ENCODE measurements at regions of chr19 and their contacts with region 1.

Region 1: DNA sequence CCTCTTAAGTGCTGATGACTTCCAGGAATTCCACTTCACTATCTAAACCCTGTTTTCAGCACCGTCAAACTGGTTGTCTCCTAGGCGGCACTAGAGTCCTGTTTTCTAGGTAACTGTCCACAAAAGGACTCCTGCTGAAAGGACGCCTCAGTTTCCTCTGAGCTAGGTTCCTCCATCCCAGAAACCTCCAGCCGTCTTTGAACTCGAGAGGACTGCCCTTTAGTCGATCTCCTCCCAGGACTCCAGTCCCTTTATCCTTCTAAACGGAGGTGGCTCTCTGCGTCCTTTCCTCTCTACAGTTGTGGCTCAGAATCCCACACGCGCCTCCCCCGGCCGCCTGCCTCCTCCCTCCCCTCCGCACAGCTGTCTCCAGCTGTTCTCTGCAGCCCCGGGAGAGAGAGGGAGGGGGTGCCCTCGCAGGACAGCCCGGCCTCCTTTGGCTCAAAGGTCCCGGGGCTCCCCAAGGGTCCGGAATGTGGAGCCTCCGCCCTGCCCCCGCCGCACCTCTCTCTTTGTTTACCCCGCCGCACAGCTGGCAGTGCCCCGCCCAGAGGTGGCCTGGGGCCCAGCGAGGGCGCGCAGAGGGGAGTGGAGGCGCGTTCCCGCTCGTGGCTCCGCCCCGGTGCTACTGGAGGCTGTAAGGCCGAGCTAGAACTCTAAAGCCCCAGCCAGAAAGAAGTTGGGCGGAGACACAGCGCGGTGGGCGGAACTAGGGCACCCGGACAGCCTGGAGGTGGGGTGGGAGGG is 2.4 kb downstream of the LTBP4 start:
- DNase-seq: peak; percentile 97
- H3K4me3 Mint-ChIP-seq: peak overlapping the region; percentile 86
- H3K27ac Mint-ChIP-seq: peak overlapping the region; percentile 87
- H3K4me1 Mint-ChIP-seq: peaks cover 58% of the 10 kb centered on the region
- H3K27me3 Mint-ChIP-seq: peaks cover 26% of the 10 kb centered on the region

Region 2: DNA sequence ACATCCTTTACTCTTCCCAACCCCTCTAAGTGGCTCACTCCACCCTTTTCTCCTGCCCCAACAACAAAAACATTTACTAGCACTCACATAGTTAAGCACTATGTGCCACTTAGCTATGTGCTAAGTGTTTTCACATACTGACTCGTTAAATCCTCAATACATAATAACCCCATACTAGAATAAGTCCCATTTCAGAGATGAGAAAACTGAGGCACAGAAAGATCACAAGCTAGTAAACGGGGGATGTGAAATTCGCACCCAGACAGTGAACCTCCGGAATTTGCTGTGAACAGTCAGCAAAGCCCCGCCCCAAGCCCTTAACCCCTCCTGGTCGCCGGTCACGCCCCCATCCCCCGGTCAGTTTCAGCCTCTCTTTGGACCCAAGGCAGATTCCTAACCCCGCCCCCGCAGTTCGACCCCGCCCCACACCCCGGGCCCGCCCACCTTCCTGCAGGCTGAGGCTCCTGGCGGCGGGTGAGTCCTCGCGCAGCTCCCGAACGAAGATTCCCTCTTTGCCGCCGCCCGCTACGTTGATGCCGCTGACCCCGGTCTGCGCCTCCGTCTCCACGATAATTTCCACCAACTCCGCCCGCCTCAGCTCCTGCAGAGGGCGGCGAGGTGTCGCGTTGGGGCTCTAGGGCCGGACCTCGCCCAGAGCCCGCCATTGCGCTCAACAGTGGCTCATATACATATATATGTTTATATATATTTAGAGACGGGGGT is 200.1 kb before region 1 on chr19:
- intact Hi-C with region 1: loop called (anchors 2 kb)
- DNase-seq: peak; percentile 80
- H3K4me3 Mint-ChIP-seq: peak overlapping the region; percentile 83
- H3K27ac Mint-ChIP-seq: peak overlapping the region; percentile 72
- H3K4me1 Mint-ChIP-seq: peaks cover 21% of the 10 kb centered on the region
- H3K27me3 Mint-ChIP-seq: peaks cover 7% of the 10 kb centered on the region

Region 3: GRCh38 chr19:40444192-40445028 is 159.2 kb before region 1 on chr19 and contains the start of gene SERTAD3:
- intact Hi-C with region 1: loop called (anchors 1 kb)
- DNase-seq: peak; percentile 97
- H3K4me3 Mint-ChIP-seq: peak within 1 kb of the TSS; percentile 97
- H3K27ac Mint-ChIP-seq: peak within 1 kb of the TSS; percentile 97
- H3K4me1 Mint-ChIP-seq: peaks cover 26% of the 10 kb centered on the region
- H3K27me3 Mint-ChIP-seq: no peaks in the 10 kb centered on the region
- total RNA-seq, gene SERTAD3: 6.4 and 10.0 TPM in 2 replicates

Region 4: GRCh38 chr19:40529093-40529954 is 74.2 kb before region 1 on chr19:
- intact Hi-C with region 1: loop called (anchors 1 kb)
- DNase-seq: peak; percentile 89
- H3K4me3 Mint-ChIP-seq: peak overlapping the region; percentile 74
- H3K27ac Mint-ChIP-seq: peak overlapping the region; percentile 79
- H3K4me1 Mint-ChIP-seq: peaks cover 13% of the 10 kb centered on the region
- H3K27me3 Mint-ChIP-seq: peaks cover 35% of the 10 kb centered on the region

Region 5: DNA sequence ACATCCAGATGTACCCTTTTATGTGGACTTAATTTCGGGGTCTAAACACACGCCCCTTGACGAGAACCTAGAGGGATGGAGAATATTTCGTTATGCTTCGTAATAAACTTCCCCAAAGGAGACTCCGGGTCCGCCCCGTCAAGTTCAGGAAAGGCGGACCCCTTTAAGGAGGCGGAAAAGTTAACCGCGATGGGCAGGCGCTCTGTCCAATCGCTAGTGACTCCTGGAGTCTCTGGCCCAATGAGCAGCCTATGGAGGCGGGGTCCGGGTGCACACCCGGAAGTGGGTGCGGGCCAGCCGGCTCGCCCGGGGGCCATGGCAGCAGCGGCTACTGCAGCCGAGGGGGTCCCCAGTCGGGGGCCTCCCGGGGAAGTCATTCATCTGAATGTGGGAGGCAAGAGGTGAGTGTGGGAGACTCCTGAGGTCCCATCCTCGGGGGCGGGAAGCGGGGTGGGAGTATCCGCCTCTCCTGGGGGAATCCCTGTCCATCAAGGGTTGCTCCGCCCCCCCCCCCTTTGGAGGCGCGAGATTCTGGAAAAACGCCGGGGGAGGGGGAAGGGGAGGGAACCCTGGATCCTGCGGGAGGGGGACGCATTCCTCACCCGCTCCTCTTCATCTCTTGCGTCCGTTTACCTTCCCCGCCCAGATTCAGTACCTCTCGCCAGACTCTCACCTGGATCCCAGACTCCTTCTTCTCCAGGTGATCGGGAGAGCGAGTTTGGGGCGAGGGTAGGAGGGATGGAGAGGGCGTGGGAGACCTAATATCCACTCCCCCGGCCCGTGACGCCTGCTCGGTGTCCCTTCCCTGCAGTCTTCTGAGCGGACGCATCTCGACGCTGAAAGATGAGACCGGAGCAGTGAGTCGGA is 26.7 kb before region 1 on chr19 and contains the start of gene SHKBP1:
- intact Hi-C with region 1: loop called (anchors 1 kb)
- DNase-seq: peak; percentile 92
- H3K4me3 Mint-ChIP-seq: peak within 1 kb of the TSS; percentile 86
- H3K27ac Mint-ChIP-seq: peak within 1 kb of the TSS; percentile 71
- H3K4me1 Mint-ChIP-seq: peaks cover 17% of the 10 kb centered on the region
- H3K27me3 Mint-ChIP-seq: no peaks in the 10 kb centered on the region
- total RNA-seq, gene SHKBP1: 102 and 113 TPM in 2 replicates

Region 6: GRCh38 chr19:40640744-40641143 is 37.2 kb after region 1 on chr19:
- intact Hi-C with region 1: no loop called
- DNase-seq: no peak
- H3K4me3 Mint-ChIP-seq: no peak overlapping the region
- H3K27ac Mint-ChIP-seq: no peak overlapping the region
- H3K4me1 Mint-ChIP-seq: peaks cover 2% of the 10 kb centered on the region
- H3K27me3 Mint-ChIP-seq: peaks cover under 1% of the 10 kb centered on the region

Region 7: GRCh38 chr19:40674291-40674690 is 70.7 kb after region 1 on chr19:
- intact Hi-C with region 1: no loop called
- DNase-seq: no peak
- H3K4me3 Mint-ChIP-seq: no peak overlapping the region
- H3K27ac Mint-ChIP-seq: peak overlapping the region; percentile 41
- H3K4me1 Mint-ChIP-seq: no peaks in the 10 kb centered on the region
- H3K27me3 Mint-ChIP-seq: no peaks in the 10 kb centered on the region

Region 8: DNA sequence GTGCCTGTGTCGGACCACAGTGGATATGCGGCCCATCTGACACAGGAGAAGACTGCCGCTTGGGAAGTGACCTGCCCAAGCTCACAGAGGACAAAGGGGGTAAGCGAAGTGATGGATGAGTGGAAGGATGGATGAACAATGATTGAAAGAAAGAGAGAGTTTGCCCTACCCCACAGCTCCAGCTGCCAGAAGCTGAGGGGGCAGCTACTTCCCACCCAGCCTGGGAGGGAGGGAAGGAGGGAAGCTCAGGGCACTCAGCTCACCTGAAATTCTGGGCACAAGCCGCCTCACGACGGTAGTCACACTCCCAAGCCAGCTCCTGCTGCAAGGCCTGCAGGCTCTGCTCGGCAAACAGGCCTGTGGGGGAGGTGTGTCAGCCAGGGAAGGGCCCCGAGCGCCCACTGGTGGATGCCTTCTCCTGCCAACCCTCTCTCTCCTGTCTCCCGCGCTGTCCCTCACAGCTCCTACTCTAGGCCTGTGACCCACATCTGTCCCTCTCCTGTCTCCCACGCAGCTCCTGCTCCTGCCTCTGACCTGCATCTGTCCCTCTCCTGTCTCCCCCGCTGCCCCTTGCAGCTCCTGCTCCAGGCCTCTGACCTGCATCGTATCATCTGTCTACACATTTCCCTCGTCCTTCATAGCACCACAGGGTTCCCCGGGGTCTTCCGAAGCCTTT is 98.9 kb after region 1 on chr19:
- intact Hi-C with region 1: no loop called
- DNase-seq: no peak
- H3K4me3 Mint-ChIP-seq: no peak overlapping the region
- H3K27ac Mint-ChIP-seq: no peak overlapping the region
- H3K4me1 Mint-ChIP-seq: no peaks in the 10 kb centered on the region
- H3K27me3 Mint-ChIP-seq: no peaks in the 10 kb centered on the region

Measured in activated T-helper 1 cell treated with anti-CD3 and anti-CD28 coated beads, Interleukin-12 subunit alpha, Interleukin-12 subunit beta, Interleukin-2, Interleukin-4 antibody, amounts not matched to agents 30 ng/mL and 10 ng/mL and 1 ng/mL, durations not matched to agents 14 hours and 24 hours and 36 hours (primary cell).